Activated T-helper 1 cell treated with anti-CD3 and anti-CD28 coated beads, Interleukin-12 subunit alpha, Interleukin-12 subunit beta, Interleukin-2, Interleukin-4 antibody, amounts not matched to agents 30 ng/mL and 10 ng/mL and 1 ng/mL, durations not matched to agents 14 hours and 24 hours and 36 hours (primary cell): ENCODE measurements at regions of chr1 and their contacts with region 1.

Region 1: GRCh38 chr1:94926915-94927404 is at the start of gene CNN3:
- DNase-seq: peak; percentile 55
- H3K4me3 Mint-ChIP-seq: peak within 1 kb of the TSS; percentile 78
- H3K27ac Mint-ChIP-seq: no peak within 1 kb of the TSS
- H3K4me1 Mint-ChIP-seq: peaks cover 21% of the 10 kb centered on the region
- H3K27me3 Mint-ChIP-seq: peaks cover 38% of the 10 kb centered on the region
- total RNA-seq, gene CNN3: 1.4 and 1.9 TPM in 2 replicates

Region 2: GRCh38 chr1:93980320-93981273 is 946.4 kb before region 1 on chr1:
- intact Hi-C with region 1: no loop called
- DNase-seq: no peak
- H3K4me3 Mint-ChIP-seq: no peak overlapping the region
- H3K27ac Mint-ChIP-seq: no peak overlapping the region
- H3K4me1 Mint-ChIP-seq: no peaks in the 10 kb centered on the region
- H3K27me3 Mint-ChIP-seq: peaks cover 7% of the 10 kb centered on the region

Region 3: GRCh38 chr1:94299627-94300552 is 627.1 kb before region 1 on chr1:
- intact Hi-C with region 1: no loop called
- DNase-seq: no peak
- H3K4me3 Mint-ChIP-seq: no peak overlapping the region
- H3K27ac Mint-ChIP-seq: no peak overlapping the region
- H3K4me1 Mint-ChIP-seq: no peaks in the 10 kb centered on the region
- H3K27me3 Mint-ChIP-seq: peaks cover 2% of the 10 kb centered on the region

Region 4: GRCh38 chr1:94854458-94855306 is 72.3 kb before region 1 on chr1:
- intact Hi-C with region 1: loop called (anchors 2 kb)
- DNase-seq: peak; percentile 73
- H3K4me3 Mint-ChIP-seq: no peak overlapping the region
- H3K27ac Mint-ChIP-seq: no peak overlapping the region
- H3K4me1 Mint-ChIP-seq: no peaks in the 10 kb centered on the region
- H3K27me3 Mint-ChIP-seq: peaks cover 2% of the 10 kb centered on the region

Region 5: GRCh38 chr1:94883691-94884090 is 43.3 kb before region 1 on chr1:
- intact Hi-C with region 1: loop called (anchors 1 kb)
- DNase-seq: no peak
- H3K4me3 Mint-ChIP-seq: peak overlapping the region; percentile 15
- H3K27ac Mint-ChIP-seq: peak overlapping the region; percentile 15
- H3K4me1 Mint-ChIP-seq: peaks cover 14% of the 10 kb centered on the region
- H3K27me3 Mint-ChIP-seq: no peaks in the 10 kb centered on the region

Region 6: GRCh38 chr1:94962409-94963265 is 35.7 kb after region 1 on chr1:
- intact Hi-C with region 1: loop called (anchors 2 kb)
- DNase-seq: peak; percentile 19
- H3K4me3 Mint-ChIP-seq: peak overlapping the region; percentile 89
- H3K27ac Mint-ChIP-seq: peak overlapping the region; percentile 92
- H3K4me1 Mint-ChIP-seq: peaks cover 5% of the 10 kb centered on the region
- H3K27me3 Mint-ChIP-seq: no peaks in the 10 kb centered on the region

Region 7: DNA sequence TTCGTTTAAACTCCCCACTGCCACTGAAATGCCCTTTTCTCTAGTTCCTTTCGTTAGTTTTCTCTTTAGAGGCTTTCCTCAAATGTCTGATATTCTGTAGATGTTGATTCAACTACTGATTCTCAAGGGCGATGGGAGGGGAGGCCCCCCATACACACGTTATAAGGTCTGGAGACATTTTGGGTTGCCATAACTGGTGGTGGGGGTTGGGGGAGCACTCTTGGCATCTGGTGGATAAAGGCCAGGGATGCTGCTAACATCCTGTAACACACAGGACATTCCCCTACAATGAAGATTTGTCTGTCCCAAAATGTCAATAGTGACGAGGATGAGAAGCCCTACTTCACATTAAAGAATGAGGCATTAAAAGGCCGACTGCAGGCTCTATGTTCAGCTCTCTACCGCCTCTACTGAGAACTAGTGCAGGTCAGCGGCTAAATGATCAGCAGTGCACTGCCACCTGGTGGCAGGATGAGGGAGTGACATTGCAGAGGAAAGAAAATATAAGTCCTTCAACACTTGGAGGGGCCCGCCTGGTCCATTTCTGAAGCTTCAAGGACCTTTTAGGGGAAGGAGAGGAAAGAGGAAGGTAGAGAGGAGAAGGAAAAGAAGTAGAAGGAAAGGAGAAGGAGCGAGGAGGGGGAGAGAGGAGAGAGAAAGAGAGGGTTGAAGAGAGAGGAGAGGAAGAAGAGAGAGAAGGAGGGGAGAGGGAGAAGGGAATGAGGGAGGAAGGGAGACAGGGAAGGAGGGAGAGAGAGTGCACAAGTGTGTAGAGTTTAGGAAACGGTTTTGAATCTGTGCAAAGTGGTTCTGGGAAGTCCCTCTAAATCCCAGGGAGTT is 116.4 kb after region 1 on chr1:
- intact Hi-C with region 1: loop called (anchors 2 kb)
- DNase-seq: peak; percentile 69
- H3K4me3 Mint-ChIP-seq: no peak overlapping the region
- H3K27ac Mint-ChIP-seq: no peak overlapping the region
- H3K4me1 Mint-ChIP-seq: no peaks in the 10 kb centered on the region
- H3K27me3 Mint-ChIP-seq: no peaks in the 10 kb centered on the region

Region 8: GRCh38 chr1:95057351-95057750 is 130.4 kb after region 1 on chr1:
- intact Hi-C with region 1: no loop called
- DNase-seq: no peak
- H3K4me3 Mint-ChIP-seq: no peak overlapping the region
- H3K27ac Mint-ChIP-seq: no peak overlapping the region
- H3K4me1 Mint-ChIP-seq: no peaks in the 10 kb centered on the region
- H3K27me3 Mint-ChIP-seq: peaks cover 5% of the 10 kb centered on the region